Activated B cell treated with CpG ODN at 0.5 μM for 24 hours (primary cell): ENCODE measurements at regions of chr4 and their contacts with region 1.

Region 1: GRCh38 chr4:70704331-70705145 is 16.2 kb downstream of the UTP3 start:
- DNase-seq: peak; percentile 69
- ATAC-seq: peak; percentile 67
- H3K4me3 Mint-ChIP-seq: peak overlapping the region; percentile 93
- H3K27ac Mint-ChIP-seq: peak overlapping the region; percentile 89
- H3K4me1 Mint-ChIP-seq: peaks cover 34% of the 10 kb centered on the region
- H3K27me3 Mint-ChIP-seq: no peaks in the 10 kb centered on the region
- CTCF ChIP-seq: no peak

Region 2: DNA sequence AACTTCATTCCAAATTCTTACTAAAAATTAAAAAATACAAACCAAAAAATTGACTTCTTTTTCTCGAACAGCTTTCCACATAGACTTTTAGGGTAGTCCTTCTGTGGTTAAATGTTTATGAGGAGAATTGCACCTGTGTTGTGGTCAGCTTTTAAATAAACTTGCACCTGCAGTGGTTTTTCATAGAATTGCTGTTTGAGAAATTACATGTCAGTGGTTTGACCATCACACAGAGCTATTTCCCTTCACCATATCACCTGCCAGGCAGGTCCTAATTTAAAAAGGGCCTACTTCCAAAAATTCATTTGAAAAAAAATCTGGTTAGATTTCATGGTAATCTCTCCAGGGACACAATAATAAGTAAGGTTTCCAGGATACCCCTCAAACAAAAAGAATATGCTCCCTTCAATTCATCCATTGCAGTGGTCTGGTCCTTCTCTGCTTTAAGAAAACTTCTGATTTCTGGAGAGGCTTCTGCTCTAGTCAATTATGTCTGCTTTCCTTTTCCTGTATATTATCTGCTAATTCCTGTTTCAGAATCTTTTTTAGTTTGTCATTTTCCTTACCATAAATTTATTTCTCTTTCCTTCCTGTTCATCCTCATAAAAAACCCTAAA is 26.0 kb before region 1 on chr4:
- CTCF ChIA-PET with region 1: interaction called, 3 read pairs
- POLR2A ChIA-PET with region 1: interaction called, 15 read pairs
- intact Hi-C with region 1: no loop called
- DNase-seq: no peak
- ATAC-seq: no peak
- H3K4me3 Mint-ChIP-seq: no peak overlapping the region
- H3K27ac Mint-ChIP-seq: peak overlapping the region; percentile 53
- H3K4me1 Mint-ChIP-seq: peaks cover 56% of the 10 kb centered on the region
- H3K27me3 Mint-ChIP-seq: no peaks in the 10 kb centered on the region
- CTCF ChIP-seq: no peak

Region 3: GRCh38 chr4:70687821-70688794 is 16.4 kb before region 1 on chr4 and contains the start of gene UTP3:
- CTCF ChIA-PET with region 1: interaction called, 48 read pairs
- POLR2A ChIA-PET with region 1: interaction called, 84 read pairs
- intact Hi-C with region 1: loop called (anchors 1 kb)
- DNase-seq: peak; percentile 83
- ATAC-seq: peak; percentile 88
- H3K4me3 Mint-ChIP-seq: peak within 1 kb of the TSS; percentile 99
- H3K27ac Mint-ChIP-seq: peak within 1 kb of the TSS; percentile 100
- H3K4me1 Mint-ChIP-seq: peaks cover 48% of the 10 kb centered on the region
- H3K27me3 Mint-ChIP-seq: no peaks in the 10 kb centered on the region
- CTCF ChIP-seq: peak; percentile 96
- total RNA-seq, gene UTP3: 38.5 and 40.1 TPM in 2 replicates

Region 4: GRCh38 chr4:70754470-70754869 is 49.9 kb after region 1 on chr4:
- CTCF ChIA-PET with region 1: interaction called, 6 read pairs
- POLR2A ChIA-PET with region 1: interaction called, 21 read pairs
- intact Hi-C with region 1: loop called (anchors 2 kb)
- DNase-seq: no peak
- ATAC-seq: peak; percentile 70
- H3K4me3 Mint-ChIP-seq: peak overlapping the region; percentile 65
- H3K27ac Mint-ChIP-seq: peak overlapping the region; percentile 86
- H3K4me1 Mint-ChIP-seq: peaks cover 64% of the 10 kb centered on the region
- H3K27me3 Mint-ChIP-seq: no peaks in the 10 kb centered on the region
- CTCF ChIP-seq: no peak

Region 5: GRCh38 chr4:70772929-70773555 is 68.5 kb after region 1 on chr4:
- CTCF ChIA-PET with region 1: no interaction called
- POLR2A ChIA-PET with region 1: interaction called, 3 read pairs
- intact Hi-C with region 1: loop called (anchors 5 kb)
- DNase-seq: no peak
- ATAC-seq: no peak
- H3K4me3 Mint-ChIP-seq: no peak overlapping the region
- H3K27ac Mint-ChIP-seq: no peak overlapping the region
- H3K4me1 Mint-ChIP-seq: peaks cover 8% of the 10 kb centered on the region
- H3K27me3 Mint-ChIP-seq: no peaks in the 10 kb centered on the region
- CTCF ChIP-seq: no peak

Region 6: DNA sequence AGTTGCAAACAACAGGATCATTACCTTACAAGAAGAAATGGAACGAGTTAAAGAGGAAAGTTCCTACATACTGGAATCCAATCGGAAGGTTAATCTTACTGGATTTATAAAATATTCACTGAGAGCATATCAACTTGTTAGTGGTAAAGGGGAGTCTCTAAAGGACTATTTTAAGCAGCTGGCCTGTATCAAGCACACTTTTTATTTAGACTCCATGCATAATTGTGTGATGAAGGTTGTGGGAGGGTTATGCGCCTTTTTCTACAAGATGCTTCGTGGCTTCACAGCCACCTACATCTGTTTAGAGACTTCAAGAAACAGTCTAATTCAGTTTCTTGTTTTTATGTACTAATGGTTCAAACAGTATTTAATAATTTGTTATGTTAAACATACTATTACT is 78.6 kb after region 1 on chr4:
- CTCF ChIA-PET with region 1: no interaction called
- POLR2A ChIA-PET with region 1: no interaction called
- intact Hi-C with region 1: no loop called
- DNase-seq: no peak
- ATAC-seq: no peak
- H3K4me3 Mint-ChIP-seq: no peak overlapping the region
- H3K27ac Mint-ChIP-seq: no peak overlapping the region
- H3K4me1 Mint-ChIP-seq: no peaks in the 10 kb centered on the region
- H3K27me3 Mint-ChIP-seq: no peaks in the 10 kb centered on the region
- CTCF ChIP-seq: no peak

Region 7: GRCh38 chr4:71241501-71242288 is 537.2 kb after region 1 on chr4:
- CTCF ChIA-PET with region 1: no interaction called
- POLR2A ChIA-PET with region 1: no interaction called
- intact Hi-C with region 1: no loop called
- DNase-seq: no peak
- ATAC-seq: no peak
- H3K4me3 Mint-ChIP-seq: no peak overlapping the region
- H3K27ac Mint-ChIP-seq: no peak overlapping the region
- H3K4me1 Mint-ChIP-seq: no peaks in the 10 kb centered on the region
- H3K27me3 Mint-ChIP-seq: peaks cover 4% of the 10 kb centered on the region
- CTCF ChIP-seq: no peak